Heart right ventricle (tissue), 16 donors: ENCODE measurements at regions of chr9 and their contacts with region 1.

Region 1: DNA sequence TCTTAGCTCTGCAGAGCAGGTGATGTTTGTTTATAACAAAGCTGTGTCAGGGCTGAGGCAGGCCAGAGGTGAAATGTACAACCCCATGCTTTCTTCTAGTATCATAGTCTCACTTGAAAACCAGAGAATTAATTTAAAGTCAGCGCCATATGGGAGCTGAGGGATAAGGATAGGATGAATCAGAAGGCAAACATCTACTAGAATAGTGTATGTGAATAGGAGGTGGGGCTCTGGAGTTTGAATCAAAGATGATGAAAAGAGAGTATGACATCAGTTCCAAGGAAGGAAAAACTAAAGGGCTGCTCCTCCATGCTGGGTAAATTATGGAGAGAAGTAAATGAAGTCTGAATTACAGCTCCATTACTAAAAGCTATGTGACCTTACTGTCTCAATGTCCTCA is 441.5 kb downstream of the RASEF start:
- DNase-seq: no peak
- ATAC-seq: no peak
- H3K4me3 ChIP-seq: no peak overlapping the region
- H3K27ac ChIP-seq: no peak overlapping the region
- H3K4me1 ChIP-seq: no peaks in the 10 kb centered on the region
- H3K27me3 ChIP-seq: peaks cover 0 to 6% (median 2%) of the 10 kb centered on the region in 7 donors
- CTCF ChIP-seq: no peak

Region 2: GRCh38 chr9:82680179-82680943 is 58.9 kb after region 1 on chr9:
- intact Hi-C with region 1: loop called in 1 of 10 experiments (anchors 10 kb)
- DNase-seq: no peak
- ATAC-seq: no peak
- H3K4me3 ChIP-seq: no peak overlapping the region
- H3K27ac ChIP-seq: no peak overlapping the region
- H3K4me1 ChIP-seq: no peaks in the 10 kb centered on the region
- H3K27me3 ChIP-seq: no peaks in the 10 kb centered on the region
- CTCF ChIP-seq: no peak

Region 3: GRCh38 chr9:83432104-83432639 is 810.7 kb after region 1 on chr9:
- intact Hi-C with region 1: no loop called
- DNase-seq: peak; percentile 69 to 81
- ATAC-seq: peak; percentile 59 to 95 (median 87)
- H3K4me3 ChIP-seq: no peak overlapping the region
- H3K27ac ChIP-seq: peak overlapping the region in 8 of 10 donors; percentile 7 to 70 (median 38)
- H3K4me1 ChIP-seq: peaks cover 10 to 48% (median 32%) of the 10 kb centered on the region in 9 donors
- H3K27me3 ChIP-seq: no peaks in the 10 kb centered on the region
- CTCF ChIP-seq: no peak